WTC11 (cell line): ENCODE measurements at regions of chr11 and their contacts with region 1.

Region 1: DNA sequence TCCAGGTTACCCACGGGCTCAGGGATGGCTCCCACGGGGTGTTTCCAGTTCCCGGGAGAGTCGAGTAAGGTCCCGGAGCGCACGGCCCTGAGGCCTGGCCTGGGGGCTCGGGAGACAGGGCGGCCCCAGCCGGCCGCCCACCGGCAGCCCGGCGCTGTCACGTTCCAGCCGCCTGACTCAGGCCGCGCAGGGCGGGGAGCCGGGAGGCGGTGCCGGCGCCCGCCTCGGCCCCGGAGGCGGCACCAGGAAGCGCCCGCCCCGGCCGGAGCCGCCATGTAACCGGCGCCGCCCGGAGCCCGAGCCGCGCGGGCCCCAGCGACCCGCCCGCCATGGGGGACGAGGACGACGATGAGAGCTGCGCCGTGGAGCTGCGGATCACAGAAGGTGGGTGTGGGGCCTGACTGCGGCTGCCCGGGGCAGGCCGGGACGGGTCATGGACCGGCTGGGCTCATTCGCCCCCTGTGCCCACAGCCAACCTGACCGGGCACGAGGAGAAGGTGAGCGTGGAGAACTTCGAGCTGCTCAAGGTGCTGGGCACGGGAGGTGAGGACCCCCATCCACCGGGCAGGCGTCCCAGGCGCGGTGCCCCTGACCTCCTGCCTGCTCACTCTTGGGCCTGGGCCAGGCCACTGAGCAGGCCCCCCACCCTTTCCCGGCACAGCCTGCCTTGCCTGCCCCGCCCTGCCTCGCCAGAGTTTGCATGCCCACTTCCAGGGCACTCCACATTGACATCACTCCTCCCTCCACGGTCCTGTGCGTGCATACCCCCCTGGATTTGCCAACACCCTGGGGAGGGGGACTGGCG is at the start of gene RPS6KA4:
- DNase-seq: peak; percentile 49
- ATAC-seq: peak; percentile 49
- H3K4me3 Mint-ChIP-seq: peak within 1 kb of the TSS; percentile 80
- H3K27ac Mint-ChIP-seq: peak within 1 kb of the TSS; percentile 50
- H3K4me1 Mint-ChIP-seq: peaks cover 26% of the 10 kb centered on the region
- H3K27me3 Mint-ChIP-seq: no peaks in the 10 kb centered on the region
- CTCF ChIP-seq: no peak
- total RNA-seq, gene RPS6KA4: 16.8 to 18.3 TPM (median 18.3 TPM) in 3 replicates

Region 2: DNA sequence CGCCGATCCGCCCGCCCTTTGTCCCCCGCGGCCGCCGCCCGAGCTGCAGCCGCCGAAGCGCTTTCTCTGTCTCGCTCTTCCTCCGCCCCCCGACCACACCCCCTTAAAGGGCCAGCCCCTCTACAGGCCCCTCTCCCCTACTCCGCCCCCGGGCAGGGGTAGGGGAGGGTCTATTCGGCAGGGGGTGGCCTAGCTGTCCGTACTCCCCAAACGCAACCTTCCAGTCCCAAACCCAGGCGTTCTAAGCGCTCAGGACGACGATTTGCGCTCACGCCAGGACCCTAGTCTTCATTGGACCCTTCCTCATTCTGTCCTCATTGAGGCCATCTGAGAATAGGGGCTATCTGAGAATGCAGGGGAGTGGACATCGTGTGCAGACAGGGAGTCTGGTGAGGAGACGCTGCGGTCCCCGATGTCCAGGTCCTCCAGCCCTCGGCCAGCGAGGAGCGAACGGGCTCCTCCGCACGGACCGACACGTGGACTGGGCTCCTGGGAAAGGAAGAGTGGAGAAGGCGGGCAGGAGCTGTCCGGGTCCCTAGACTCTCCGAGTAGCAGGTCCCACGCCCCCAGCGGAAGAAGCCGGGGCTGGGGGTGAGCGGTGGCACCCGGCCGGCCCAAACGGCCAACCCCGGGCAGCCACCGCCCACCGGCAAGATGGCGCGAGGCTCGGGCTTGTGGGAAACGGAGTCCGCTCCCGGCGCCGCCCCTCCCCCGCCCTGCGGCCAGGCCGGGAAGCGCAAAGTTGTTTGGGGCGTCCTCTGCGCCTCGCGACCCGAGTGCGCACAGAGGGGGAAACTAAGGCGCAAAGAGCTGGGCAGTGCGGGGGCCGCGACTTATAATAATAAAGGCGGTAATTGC is 112.0 kb before region 1 on chr11 and contains the start of gene PPP1R14B:
- CTCF ChIA-PET with region 1: interaction called, 22 read pairs
- POLR2A ChIA-PET with region 1: no interaction called
- DNase-seq: peak; percentile 95
- ATAC-seq: peak; percentile 55
- H3K4me3 Mint-ChIP-seq: peak within 1 kb of the TSS; percentile 88
- H3K27ac Mint-ChIP-seq: peak within 1 kb of the TSS; percentile 97
- H3K4me1 Mint-ChIP-seq: peaks cover 50% of the 10 kb centered on the region
- H3K27me3 Mint-ChIP-seq: no peaks in the 10 kb centered on the region
- CTCF ChIP-seq: no peak
- total RNA-seq, gene PPP1R14B: 435 to 471 TPM (median 458 TPM) in 3 replicates

Region 3: GRCh38 chr11:64317957-64318693 is 41.0 kb before region 1 on chr11 and contains the start of gene PRDX5:
- CTCF ChIA-PET with region 1: interaction called, 173 read pairs
- POLR2A ChIA-PET with region 1: interaction called, 15 read pairs
- DNase-seq: peak; percentile 90
- ATAC-seq: peak; percentile 71
- H3K4me3 Mint-ChIP-seq: peak within 1 kb of the TSS; percentile 90
- H3K27ac Mint-ChIP-seq: peak within 1 kb of the TSS; percentile 99
- H3K4me1 Mint-ChIP-seq: peaks cover 17% of the 10 kb centered on the region
- H3K27me3 Mint-ChIP-seq: no peaks in the 10 kb centered on the region
- CTCF ChIP-seq: no peak
- total RNA-seq, gene PRDX5: 255 to 293 TPM (median 282 TPM) in 3 replicates

Region 4: GRCh38 chr11:64386306-64386702 is 27.2 kb after region 1 on chr11:
- CTCF ChIA-PET with region 1: interaction called, 30 read pairs
- POLR2A ChIA-PET with region 1: no interaction called
- DNase-seq: no peak
- ATAC-seq: no peak
- H3K4me3 Mint-ChIP-seq: no peak overlapping the region
- H3K27ac Mint-ChIP-seq: no peak overlapping the region
- H3K4me1 Mint-ChIP-seq: peaks cover 3% of the 10 kb centered on the region
- H3K27me3 Mint-ChIP-seq: peaks cover 40% of the 10 kb centered on the region
- CTCF ChIP-seq: no peak

Region 5: GRCh38 chr11:64428693-64429092 is 69.6 kb after region 1 on chr11:
- CTCF ChIA-PET with region 1: interaction called, 17 read pairs
- POLR2A ChIA-PET with region 1: no interaction called
- DNase-seq: no peak
- ATAC-seq: no peak
- H3K4me3 Mint-ChIP-seq: no peak overlapping the region
- H3K27ac Mint-ChIP-seq: no peak overlapping the region
- H3K4me1 Mint-ChIP-seq: no peaks in the 10 kb centered on the region
- H3K27me3 Mint-ChIP-seq: peaks cover 50% of the 10 kb centered on the region
- CTCF ChIP-seq: no peak

Region 6: GRCh38 chr11:64571410-64572091 is 212.4 kb after region 1 on chr11:
- CTCF ChIA-PET with region 1: interaction called, 28 read pairs
- POLR2A ChIA-PET with region 1: no interaction called
- DNase-seq: peak; percentile 53
- ATAC-seq: peak; percentile 63
- H3K4me3 Mint-ChIP-seq: no peak overlapping the region
- H3K27ac Mint-ChIP-seq: no peak overlapping the region
- H3K4me1 Mint-ChIP-seq: peaks cover 22% of the 10 kb centered on the region
- H3K27me3 Mint-ChIP-seq: peaks cover 19% of the 10 kb centered on the region
- CTCF ChIP-seq: no peak

Region 7: DNA sequence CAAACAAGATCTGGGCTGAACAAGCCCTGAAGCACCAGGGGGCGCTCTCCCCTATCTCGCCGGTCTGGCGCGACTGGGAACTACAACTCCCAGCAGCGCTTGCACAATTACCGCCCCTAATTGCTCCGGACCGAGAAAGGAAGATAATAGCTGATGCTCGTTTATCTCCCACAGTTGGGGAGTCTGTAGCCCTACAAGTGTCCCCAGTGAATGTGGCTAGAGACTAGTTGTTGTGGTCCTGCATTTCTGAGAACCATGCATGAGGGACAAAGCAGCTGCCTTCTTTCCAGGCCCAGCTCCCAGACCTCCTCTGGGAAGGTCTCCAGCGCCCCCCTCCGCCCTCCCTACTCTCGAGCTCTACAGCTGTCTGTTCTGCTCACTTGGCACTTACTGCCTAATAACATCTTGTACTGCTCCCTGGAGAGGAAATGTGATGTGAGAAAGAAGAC is 329.4 kb after region 1 on chr11:
- CTCF ChIA-PET with region 1: interaction called, 11 read pairs
- POLR2A ChIA-PET with region 1: no interaction called
- DNase-seq: peak; percentile 98
- ATAC-seq: peak; percentile 88
- H3K4me3 Mint-ChIP-seq: peak overlapping the region; percentile 87
- H3K27ac Mint-ChIP-seq: peak overlapping the region; percentile 39; the same call in 1 of the 2 replicates
- H3K4me1 Mint-ChIP-seq: peaks cover 27% of the 10 kb centered on the region
- H3K27me3 Mint-ChIP-seq: peaks cover 41% of the 10 kb centered on the region
- CTCF ChIP-seq: peak; percentile 93